Activated B cell treated with CpG ODN at 0.5 μM for 24 hours (primary cell): ENCODE measurements at regions of chr12 and their contacts with region 1.

Region 1: GRCh38 chr12:26402648-26403047 is 207.3 kb downstream of the SSPN start:
- DNase-seq: no peak
- ATAC-seq: peak; percentile 54
- H3K4me3 Mint-ChIP-seq: no peak overlapping the region
- H3K27ac Mint-ChIP-seq: no peak overlapping the region
- H3K4me1 Mint-ChIP-seq: no peaks in the 10 kb centered on the region
- H3K27me3 Mint-ChIP-seq: no peaks in the 10 kb centered on the region
- CTCF ChIP-seq: no peak

Region 2: GRCh38 chr12:26425587-26426260 is 23.1 kb after region 1 on chr12:
- CTCF ChIA-PET with region 1: interaction called, 3 read pairs
- POLR2A ChIA-PET with region 1: interaction called, 10 read pairs
- intact Hi-C with region 1: no loop called
- DNase-seq: no peak
- ATAC-seq: peak; percentile 54
- H3K4me3 Mint-ChIP-seq: peak overlapping the region; percentile 44
- H3K27ac Mint-ChIP-seq: peak overlapping the region; percentile 61
- H3K4me1 Mint-ChIP-seq: peaks cover 11% of the 10 kb centered on the region
- H3K27me3 Mint-ChIP-seq: no peaks in the 10 kb centered on the region
- CTCF ChIP-seq: no peak